Left colon (tissue), 2 donors: ENCODE measurements at regions of chr5 and their contacts with region 1.

Region 1: DNA sequence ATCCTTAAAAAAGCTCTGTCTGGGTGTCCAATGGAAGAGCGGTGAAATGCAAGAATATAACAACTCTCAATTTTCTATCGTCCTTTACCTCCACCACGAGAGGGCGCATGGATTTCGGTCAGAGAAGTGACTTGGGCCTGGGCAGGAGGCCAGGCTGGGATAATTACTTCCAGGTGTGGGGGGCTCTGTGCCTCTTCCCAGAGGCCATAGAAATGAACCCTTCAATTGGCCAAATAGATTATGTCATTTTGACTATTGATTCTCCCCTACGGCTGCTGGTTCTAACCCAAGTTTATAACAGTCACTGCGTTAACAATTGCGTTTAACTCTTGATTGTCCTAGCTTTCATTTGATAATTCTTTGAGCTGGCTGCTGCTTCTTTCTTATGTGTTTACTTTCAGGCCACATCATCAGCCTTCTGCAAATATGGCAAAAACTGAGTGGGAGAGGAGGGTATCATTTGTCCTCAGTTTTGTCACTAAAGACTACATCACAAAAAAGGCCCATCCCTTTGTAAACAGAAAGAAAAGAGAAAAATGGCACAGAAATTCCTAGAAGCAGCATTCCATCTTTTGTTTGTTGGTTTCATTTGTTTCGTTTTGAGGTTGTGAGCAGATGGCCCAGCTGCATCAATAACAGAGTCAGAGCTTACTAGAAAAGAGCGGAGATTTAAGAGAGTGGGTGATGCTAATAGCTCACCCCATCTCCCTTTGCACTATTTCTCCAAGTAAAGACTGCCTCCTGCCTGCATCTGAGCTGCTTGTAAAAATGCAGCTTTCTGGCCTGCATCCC is 45.4 kb upstream of the ZFR start:
- DNase-seq: peak; percentile 72 to 85
- ATAC-seq: peak; percentile 79

Region 2: DNA sequence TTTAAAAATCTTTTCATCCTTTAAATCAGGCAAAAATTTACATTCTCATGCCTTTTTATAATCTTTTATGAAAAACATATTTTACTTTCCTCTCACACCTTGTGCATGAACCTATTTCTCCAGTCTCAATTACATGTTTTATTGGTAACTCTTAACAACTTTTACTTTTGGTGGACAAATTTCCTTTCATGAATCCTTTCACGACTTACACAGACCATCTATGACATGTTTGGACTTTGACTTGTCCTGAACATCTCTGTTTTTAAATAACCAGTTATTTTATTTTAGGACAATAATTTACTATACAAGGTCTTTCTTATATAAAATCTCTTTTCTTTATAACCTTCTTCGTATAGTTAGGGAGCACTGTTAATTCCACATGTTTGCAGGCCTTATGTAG is 150.8 kb before region 1 on chr5:
- intact Hi-C with region 1: no loop called
- DNase-seq: no peak
- ATAC-seq: no peak

Region 3: DNA sequence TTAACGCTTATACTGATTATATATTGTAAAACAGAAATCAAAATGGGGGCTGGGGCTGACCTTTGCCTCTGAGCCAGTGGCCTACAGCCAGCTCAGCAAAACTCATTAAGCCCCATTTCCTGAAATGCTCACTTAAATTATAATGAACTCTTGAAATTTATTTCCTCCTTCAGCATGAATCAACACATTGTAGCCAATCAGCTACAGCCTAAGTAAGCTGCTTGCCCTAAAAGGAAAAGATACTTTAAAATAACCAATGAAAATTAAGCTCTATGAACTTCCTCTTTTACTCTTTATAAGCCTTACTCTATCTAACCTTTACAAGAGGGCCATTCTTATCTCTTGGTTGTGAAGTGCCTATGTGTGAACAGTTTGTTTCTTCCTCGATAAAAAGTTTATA is 61.9 kb after region 1 on chr5:
- intact Hi-C with region 1: no loop called
- DNase-seq: no peak
- ATAC-seq: peak; percentile 73

Region 4: GRCh38 chr5:32585446-32586275 is 95.7 kb after region 1 on chr5 and contains the start of gene SUB1:
- intact Hi-C with region 1: loop called in 1 of 2 experiments (anchors 5 kb)
- DNase-seq: peak; percentile 94 to 98
- ATAC-seq: peak; percentile 94
- total RNA-seq, gene SUB1: 169 to 188 TPM

Region 5: DNA sequence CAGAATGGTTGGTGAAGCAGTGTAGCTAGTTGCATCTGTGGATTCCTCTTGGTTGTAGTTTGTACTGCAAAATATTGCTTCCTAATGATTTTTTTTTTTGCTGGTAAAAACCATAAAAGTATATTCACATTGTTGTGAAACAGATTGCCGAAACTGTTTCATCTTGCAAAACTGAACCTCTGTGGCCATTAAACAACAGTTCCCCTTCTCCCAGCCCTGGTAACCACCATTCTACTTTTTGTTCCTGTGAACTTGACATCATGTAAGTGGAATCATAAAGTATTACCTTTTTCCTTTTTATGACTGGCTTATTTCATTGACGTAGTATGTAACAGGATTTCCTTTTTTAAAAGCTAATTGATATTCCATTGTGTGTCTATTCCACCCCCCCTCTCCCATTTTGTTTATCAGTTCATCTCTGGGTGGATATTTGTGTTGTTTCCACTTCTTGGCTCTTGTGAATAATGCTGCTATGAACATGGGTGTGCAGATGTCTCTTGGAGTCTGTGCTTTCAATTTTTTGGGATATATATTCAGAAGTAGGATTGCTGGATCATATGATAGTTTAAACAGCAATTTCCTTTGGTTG is 107.1 kb after region 1 on chr5:
- intact Hi-C with region 1: loop called in 1 of 2 experiments (anchors 5 kb)
- DNase-seq: no peak
- ATAC-seq: no peak

Region 6: GRCh38 chr5:32613050-32613672 is 123.2 kb after region 1 on chr5:
- intact Hi-C with region 1: loop called in 1 of 2 experiments (anchors 10 kb)
- DNase-seq: peak; percentile 67 to 88
- ATAC-seq: peak; percentile 88